ENCODE measurements at regions of chr16 and their contacts with region 1.

Region 1: DNA sequence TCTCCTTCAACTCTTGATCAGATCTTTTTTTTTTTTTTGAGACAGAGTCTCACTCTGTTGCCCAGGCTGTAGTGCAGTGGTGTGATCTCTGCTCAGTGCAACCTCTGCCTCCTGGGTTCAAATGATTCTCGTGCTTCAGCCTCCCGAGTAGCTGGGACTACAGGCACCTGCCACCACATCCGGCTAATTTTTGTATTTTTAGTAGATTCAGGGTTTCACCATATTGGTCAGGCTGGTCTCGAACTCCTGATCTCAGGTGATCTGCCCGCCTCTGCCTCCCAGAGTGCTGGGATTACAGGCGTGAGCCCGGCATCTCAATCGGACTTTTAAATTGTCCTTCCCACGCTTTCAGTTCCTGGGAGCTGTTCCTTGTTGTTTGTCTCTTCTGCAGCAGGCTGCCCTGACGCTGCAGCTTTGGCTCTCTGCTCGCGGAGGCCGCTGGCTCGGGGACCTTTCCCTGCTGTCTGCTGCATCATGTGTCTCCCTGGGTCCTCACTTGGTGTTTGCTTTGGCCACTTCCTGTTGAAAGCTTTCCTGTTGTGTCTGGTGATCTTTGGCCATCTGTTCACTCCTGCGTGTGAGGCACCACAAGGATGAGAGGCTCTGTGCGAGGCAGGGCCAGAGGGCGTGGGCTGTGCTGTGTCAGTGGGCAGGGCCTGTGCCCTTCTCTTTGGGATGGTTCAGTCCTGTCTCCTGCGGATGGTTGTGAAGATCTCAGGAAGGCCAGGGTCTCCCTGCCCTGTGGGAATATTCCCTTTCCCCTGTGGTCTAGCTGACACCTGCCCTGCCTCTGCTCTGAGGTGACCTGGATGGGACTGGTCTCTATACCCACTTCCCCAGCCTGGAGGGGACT is 18.4 kb upstream of the CAPN15 start:
- DNase-seq: peak; percentile 48
- H3K4me3 ChIP-seq: no peak overlapping the region
- H3K27ac ChIP-seq: peak overlapping the region in 1 of 4 donors; percentile 71
- H3K4me1 ChIP-seq: peaks cover 0 to 10% (median 0%) of the 10 kb centered on the region in 4 donors
- H3K27me3 ChIP-seq: no peaks in the 10 kb centered on the region
- CTCF ChIP-seq: no peak
- EP300 ChIP-seq: no peak
- POLR2A ChIP-seq: no peak

Region 2: DNA sequence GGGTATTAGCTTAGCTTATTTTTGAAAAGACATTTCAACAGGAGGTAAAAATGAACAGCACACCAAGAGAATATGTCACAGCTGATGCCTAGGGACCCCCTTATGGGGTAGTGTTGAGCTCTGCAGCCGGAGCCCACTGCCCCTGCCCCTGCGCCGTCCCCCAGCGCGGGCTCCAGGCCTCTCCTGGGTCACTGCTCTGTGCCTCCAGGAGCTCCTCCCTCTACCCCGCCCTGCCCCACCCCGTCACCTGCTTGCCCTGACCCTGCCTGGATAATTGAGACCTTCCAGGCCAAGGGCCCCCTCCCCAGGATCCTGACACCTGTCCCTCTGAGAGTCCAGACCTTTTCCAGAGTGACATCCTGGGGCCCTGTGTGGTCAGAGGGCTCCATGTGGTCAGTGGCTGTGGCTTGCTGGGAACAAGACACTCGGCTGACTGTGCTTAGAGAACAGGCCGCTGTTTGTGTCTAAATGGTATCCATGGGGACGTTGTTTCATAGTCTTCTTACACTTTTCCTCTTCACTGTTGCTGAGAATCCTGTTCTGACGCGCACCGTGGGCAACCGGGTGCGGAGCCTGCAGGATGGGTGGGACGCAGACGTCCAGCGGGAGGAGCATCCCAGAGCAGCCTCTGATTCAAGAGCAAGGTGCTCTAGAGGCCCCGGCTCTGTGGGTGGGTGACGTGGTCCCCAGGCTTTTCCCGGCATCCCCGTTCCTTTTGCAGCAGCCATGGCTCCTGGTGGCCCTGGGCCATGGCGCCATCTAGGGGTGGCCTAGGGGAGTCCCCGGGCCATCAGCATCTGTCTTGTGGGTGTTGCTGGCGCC is 101.6 kb after region 1 on chr16:
- in situ Hi-C with region 1: loop called in 1 of 4 experiments (anchors 25 kb)
- intact Hi-C with region 1: no loop called
- DNase-seq: peak; percentile 68
- H3K4me3 ChIP-seq: no peak overlapping the region
- H3K27ac ChIP-seq: peak overlapping the region in 3 of 4 donors; percentile 10 to 43 (median 31)
- H3K4me1 ChIP-seq: peaks cover 0 to 22% (median 11%) of the 10 kb centered on the region in 4 donors
- H3K27me3 ChIP-seq: no peaks in the 10 kb centered on the region
- CTCF ChIP-seq: peak; percentile 71 to 87 (median 83)
- EP300 ChIP-seq: no peak
- POLR2A ChIP-seq: no peak

Measured in transverse colon (tissue), 4 donors.